ENCODE measurements at regions of chr1 and their contacts with region 1.

Region 1: DNA sequence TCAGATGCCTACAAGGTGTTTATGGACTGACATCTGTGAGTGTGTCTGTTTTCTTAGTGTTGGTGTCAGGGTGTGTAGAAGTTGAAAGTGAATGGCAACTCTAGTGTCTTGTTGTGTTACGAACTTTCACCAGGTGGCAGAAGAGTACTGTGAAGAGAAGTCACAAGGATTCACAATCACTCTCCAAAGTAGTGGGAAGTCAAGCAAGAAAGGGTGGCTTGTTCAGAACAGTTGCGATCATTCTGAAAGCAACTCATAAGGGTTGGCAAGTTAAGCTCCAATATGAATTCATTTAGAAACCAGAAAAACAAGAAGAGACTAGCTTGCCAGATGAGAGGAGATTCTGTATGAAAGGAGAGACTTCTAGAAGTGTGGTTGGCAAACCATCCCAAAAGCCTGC is 86.1 kb downstream of the FASLG start:
- DNase-seq: peak; percentile 78
- H3K4me3 ChIP-seq: no peak overlapping the region
- H3K27ac ChIP-seq: no peak overlapping the region
- H3K4me1 ChIP-seq: peaks cover 21% of the 10 kb centered on the region
- H3K27me3 ChIP-seq: no peaks in the 10 kb centered on the region
- CTCF ChIP-seq: peak; percentile 74 to 79

Region 2: DNA sequence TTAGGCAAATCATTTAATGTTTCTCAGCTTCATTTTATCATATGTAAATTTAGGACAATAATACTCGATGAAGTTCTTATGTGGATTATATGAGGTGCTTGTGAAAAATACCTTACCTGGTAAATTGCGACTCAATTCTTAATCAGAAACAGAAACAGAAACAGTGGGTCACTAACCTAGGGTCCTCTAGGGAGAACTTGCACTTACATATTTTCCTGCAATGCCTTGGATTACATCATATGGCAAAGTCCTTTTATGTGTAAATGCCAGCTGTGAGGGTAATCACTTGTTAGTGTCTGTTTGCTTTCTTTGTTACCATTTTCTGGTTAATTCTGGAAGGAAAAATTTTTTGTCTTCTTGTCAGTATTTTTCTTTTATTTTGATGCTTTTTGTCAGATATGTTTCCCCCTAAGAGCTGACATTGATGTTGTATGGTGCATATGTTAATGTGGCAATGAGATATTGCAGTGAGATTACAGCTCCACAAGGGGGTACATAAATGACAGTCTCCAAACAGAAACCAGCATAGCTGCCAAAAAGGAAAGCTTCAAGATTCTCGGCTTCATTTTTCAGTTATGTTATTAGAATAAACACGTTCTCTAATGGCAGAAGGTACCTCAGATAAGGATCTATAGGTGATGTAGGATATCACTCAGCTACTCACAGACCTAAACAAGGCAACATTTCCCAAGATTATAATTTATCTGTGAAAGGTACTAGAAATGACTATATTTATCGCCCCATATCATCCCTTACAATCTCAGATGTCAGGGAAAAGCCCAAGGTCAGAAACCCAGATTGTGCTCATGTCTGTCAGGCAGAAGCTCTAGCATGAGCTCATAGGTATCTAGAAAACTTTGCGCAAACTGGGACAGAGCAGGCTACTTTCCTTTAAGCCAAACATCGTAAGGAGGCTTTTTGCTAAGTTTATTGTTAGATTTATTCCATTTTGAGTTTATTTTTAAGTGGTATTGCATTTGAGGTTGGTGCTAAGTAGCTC is 33.7 kb after region 1 on chr1:
- CTCF ChIA-PET with region 1: no interaction called
- dilution Hi-C with region 1: no loop called
- in situ Hi-C with region 1: no loop called
- intact Hi-C with region 1: no loop called
- DNase-seq: no peak
- H3K4me3 ChIP-seq: no peak overlapping the region
- H3K27ac ChIP-seq: no peak overlapping the region
- H3K4me1 ChIP-seq: no peaks in the 10 kb centered on the region
- H3K27me3 ChIP-seq: no peaks in the 10 kb centered on the region
- CTCF ChIP-seq: peak; percentile 16 to 22

Region 3: GRCh38 chr1:172917972-172918371 is 173.0 kb after region 1 on chr1:
- CTCF ChIA-PET with region 1: no interaction called
- dilution Hi-C with region 1: no loop called
- in situ Hi-C with region 1: no loop called
- intact Hi-C with region 1: loop called (anchors 10 kb)
- DNase-seq: peak; percentile 94
- H3K4me3 ChIP-seq: no peak overlapping the region
- H3K27ac ChIP-seq: peak overlapping the region; percentile 73
- H3K4me1 ChIP-seq: peaks cover 51% of the 10 kb centered on the region
- H3K27me3 ChIP-seq: no peaks in the 10 kb centered on the region
- CTCF ChIP-seq: no peak

Region 4: DNA sequence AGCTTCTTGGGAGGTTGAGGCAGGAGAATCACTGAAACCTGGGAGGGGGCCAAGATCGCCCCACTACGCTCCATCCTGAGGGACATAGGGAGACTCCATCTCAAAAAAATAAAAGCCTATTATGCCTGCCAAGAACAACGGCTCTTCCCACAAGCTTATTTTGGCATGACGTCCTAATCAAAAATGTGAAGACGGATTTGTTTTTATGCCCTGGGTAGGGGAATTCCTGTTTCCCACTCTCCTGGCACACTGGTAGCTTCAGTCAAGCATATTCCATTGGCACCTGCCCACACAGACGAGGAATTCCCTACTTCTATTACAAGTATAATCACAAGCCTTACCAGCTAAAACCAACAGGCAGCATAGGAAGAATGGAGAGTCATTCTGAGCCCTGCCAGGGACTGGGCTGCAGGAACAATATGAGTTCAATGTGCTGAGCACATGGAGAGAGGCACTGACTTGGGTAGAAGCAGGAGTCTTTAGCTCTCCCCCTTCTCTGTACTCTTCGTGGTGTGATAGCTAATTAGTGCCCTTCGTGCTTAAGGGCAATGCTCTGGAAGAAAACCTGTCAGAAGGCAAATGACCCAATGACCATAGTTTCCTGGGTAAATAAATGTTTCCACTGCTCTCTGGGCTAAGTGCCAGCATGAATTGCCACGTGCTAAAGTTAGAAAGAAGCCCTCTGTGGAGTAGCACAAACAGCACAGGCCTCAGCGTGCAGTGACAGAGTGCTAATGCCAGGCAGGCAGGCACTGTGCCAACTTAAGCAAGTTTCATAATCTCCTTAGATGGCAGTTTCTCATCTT is 445.3 kb after region 1 on chr1:
- CTCF ChIA-PET with region 1: no interaction called
- dilution Hi-C with region 1: no loop called
- in situ Hi-C with region 1: loop called in 1 of 2 experiments (anchors 10 kb)
- intact Hi-C with region 1: no loop called
- DNase-seq: peak; percentile 93
- H3K4me3 ChIP-seq: no peak overlapping the region
- H3K27ac ChIP-seq: peak overlapping the region; percentile 68
- H3K4me1 ChIP-seq: peaks cover 17% of the 10 kb centered on the region
- H3K27me3 ChIP-seq: no peaks in the 10 kb centered on the region
- CTCF ChIP-seq: no peak

Region 5: GRCh38 chr1:173409613-173410012 is 664.6 kb after region 1 on chr1:
- CTCF ChIA-PET with region 1: no interaction called
- dilution Hi-C with region 1: loop called (anchors 25 kb)
- in situ Hi-C with region 1: no loop called
- intact Hi-C with region 1: loop called (anchors 5 kb)
- DNase-seq: peak; percentile 37
- H3K4me3 ChIP-seq: no peak overlapping the region
- H3K27ac ChIP-seq: no peak overlapping the region
- H3K4me1 ChIP-seq: peaks cover 20% of the 10 kb centered on the region
- H3K27me3 ChIP-seq: no peaks in the 10 kb centered on the region
- CTCF ChIP-seq: no peak

Region 6: DNA sequence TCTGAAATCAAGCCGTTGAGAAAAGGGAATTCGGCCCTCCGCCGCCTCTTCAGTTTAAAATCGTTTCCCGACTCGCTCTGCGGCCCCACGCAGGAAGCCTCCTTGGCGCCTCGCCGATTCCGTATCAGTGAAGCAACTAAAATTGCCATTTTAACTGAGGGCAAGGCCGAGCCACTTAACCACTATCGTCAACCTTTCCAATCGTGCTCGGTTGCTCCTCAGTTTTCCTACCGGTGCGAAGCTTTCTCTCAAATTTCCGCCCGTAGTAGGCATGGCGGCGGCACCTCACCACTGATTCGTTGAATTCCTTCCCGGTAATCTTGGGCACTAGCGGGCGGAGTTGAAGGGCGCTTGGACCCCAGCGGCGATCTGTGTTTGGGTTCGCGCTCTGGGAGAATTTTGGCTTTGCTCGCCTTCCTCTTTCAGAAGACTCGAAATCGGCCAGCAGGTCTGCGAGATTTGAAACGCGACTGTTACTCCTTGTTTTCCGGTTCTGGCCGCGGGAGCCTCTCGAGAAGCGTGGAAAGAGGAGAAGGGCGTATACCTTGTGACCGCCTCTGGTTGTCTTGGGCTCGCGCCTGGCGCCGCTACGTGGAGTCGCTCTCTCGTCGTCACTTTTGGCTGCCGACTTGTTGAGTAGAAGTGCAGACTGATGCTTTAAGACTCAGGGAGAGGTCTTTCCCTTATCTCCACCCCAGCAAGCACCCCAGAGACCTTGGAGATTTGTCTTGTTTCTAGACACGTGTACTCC is 1079.5 kb after region 1 on chr1 and contains the starts of genes CENPL and DARS2:
- CTCF ChIA-PET with region 1: no interaction called
- dilution Hi-C with region 1: no loop called
- in situ Hi-C with region 1: loop called in 1 of 2 experiments (anchors 25 kb)
- intact Hi-C with region 1: loop called (anchors 1 kb)
- DNase-seq: peak; percentile 97
- H3K4me3 ChIP-seq: peak within 1 kb of the TSS; percentile 77 to 100 (median 91)
- H3K27ac ChIP-seq: peak within 1 kb of the TSS; percentile 83
- H3K4me1 ChIP-seq: peaks cover 5% of the 10 kb centered on the region
- H3K27me3 ChIP-seq: no peaks in the 10 kb centered on the region
- CTCF ChIP-seq: no peak
- total RNA-seq, gene CENPL: 7.7 to 21.6 TPM
- total RNA-seq, gene DARS2: 22.3 to 29.9 TPM

Region 7: DNA sequence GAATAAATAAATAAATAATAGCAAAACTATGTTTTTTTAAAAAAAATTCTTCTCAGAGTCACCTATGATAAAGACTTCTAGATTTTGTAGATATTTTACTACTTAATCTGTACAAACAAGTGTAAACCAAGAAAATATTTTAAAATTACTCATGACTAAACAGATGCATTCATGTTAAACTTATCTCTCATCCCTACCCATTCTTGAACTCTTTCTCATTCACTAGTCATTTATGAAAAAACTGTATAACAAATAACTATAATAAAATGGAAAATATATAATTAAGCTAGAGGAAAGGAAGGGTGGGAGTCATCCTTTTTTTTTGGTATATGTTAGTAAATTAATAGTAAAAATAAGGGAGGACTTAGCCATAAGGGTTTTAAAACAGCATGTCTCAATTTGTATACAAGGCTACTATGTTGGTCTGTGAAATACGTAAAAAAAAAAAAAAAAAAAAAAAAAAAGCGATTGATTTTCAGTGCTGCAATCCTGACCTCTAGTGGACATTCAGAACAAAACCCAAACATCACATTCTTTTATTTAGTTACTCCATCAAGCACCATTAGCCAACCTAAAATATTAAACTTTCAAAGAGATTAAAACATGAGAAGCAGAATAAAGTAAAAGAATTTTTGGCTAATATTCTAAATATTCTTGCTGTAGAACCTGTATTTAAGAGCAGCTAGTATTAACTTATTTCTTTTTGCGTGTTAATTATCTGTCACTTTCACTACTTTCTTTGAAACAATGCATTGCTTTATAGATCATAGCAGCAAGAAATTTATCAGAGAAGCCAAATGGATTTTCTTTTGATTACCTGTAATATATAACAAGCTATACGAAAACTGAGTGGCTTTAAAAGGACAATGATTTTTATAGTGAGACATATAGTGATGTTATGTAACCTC is 1998.9 kb after region 1 on chr1:
- CTCF ChIA-PET with region 1: no interaction called
- dilution Hi-C with region 1: no loop called
- in situ Hi-C with region 1: no loop called
- intact Hi-C with region 1: loop called (anchors 5 kb)
- DNase-seq: peak; percentile 28
- H3K4me3 ChIP-seq: no peak overlapping the region
- H3K27ac ChIP-seq: no peak overlapping the region
- H3K4me1 ChIP-seq: no peaks in the 10 kb centered on the region
- H3K27me3 ChIP-seq: no peaks in the 10 kb centered on the region
- CTCF ChIP-seq: peak; percentile 54 to 55

Measured in mammary epithelial cell (primary cell).